OCI-LY7 (cell line): ENCODE measurements at regions of chr2 and their contacts with region 1.

Region 1: GRCh38 chr2:227565080-227565479 is 33.6 kb upstream of the SCYGR2 start:
- DNase-seq: no peak
- H3K4me3 ChIP-seq: no peak overlapping the region
- H3K27ac ChIP-seq: no peak overlapping the region
- H3K4me1 ChIP-seq: no peaks in the 10 kb centered on the region
- CTCF ChIP-seq: no peak

Region 2: DNA sequence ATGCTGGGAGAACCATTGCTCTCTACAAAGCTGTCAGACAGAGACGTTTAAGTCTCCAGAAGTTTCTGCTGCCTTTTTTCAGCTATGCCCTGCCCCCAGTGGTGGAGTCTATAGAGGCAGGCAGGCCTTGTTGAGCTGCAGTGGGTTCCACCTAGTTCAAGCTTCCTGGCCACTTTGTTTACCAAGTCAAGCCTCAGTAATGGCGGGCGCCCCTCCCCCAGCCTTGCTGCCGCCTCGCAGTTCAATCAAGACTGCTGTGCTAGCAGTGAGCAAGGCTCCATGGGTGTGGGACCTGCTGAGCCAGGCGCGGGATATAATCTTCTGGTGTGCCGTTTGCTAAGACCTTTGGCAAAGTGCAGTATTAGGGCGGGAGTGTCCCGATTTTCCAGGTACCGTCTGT is 19.1 kb before region 1 on chr2:
- CTCF ChIA-PET with region 1: no interaction called
- POLR2A ChIA-PET with region 1: no interaction called
- intact Hi-C with region 1: loop called (anchors 1 kb)
- DNase-seq: peak; percentile 16
- H3K4me3 ChIP-seq: no peak overlapping the region
- H3K27ac ChIP-seq: no peak overlapping the region
- H3K4me1 ChIP-seq: no peaks in the 10 kb centered on the region
- CTCF ChIP-seq: peak; percentile 53; the same call in 1 of the 2 replicates